ENCODE measurements at regions of chr1 and their contacts with region 1.

Region 1: DNA sequence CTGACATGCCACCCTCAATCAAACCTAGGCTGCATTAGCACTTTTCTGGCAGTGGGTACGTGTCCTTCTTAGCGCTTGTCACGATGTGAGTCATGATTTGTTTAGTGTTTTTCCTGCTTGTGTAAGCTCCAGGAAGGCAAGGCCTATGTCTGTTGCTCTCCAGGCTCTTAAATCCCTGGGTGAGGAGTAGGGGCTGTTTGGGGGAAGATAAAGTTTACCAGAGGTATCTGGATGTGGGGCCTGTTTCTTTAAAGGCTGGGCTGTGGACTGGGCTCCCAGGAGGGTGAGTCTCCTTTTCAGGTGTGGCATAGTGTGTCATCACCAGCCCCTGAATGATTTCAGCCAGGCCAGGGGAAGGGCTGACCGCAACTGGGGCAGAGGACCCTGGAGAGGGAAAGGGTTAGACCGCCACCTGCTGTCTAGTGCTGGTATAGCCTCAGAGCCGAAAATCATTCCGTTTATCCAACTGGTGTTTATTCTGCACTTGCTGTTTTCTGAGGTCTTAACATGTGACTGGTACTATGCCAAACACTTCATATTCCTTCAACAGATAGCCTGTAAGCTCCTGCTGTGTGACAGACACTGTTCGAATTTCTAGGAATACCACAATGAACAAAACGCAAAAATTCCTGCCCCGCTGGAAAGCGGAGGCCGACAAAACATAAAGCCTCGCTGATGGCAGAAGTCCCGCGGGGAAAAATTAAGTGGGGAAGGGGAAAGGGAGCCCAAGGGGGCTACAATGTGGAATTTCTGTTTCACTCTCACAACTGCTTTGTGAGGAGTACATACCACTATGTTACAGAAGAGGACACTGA is 9.7 kb downstream of the SERINC2 start:
- DNase-seq: peak; percentile 76
- H3K4me3 ChIP-seq: no peak overlapping the region
- H3K27ac ChIP-seq: no peak overlapping the region
- H3K4me1 ChIP-seq: no peaks in the 10 kb centered on the region
- H3K27me3 ChIP-seq: no peaks in the 10 kb centered on the region
- CTCF ChIP-seq: peak; percentile 74 to 95 (median 88)
- EP300 ChIP-seq: no peak
- POLR2A ChIP-seq: no peak

Region 2: GRCh38 chr1:31183873-31184554 is 238.7 kb before region 1 on chr1:
- intact Hi-C with region 1: loop called (anchors 1 kb)
- DNase-seq: no peak
- H3K4me3 ChIP-seq: no peak overlapping the region
- H3K27ac ChIP-seq: no peak overlapping the region
- H3K4me1 ChIP-seq: peaks cover 0 to 16% (median 12%) of the 10 kb centered on the region in 4 donors
- H3K27me3 ChIP-seq: peaks cover 3 to 38% (median 26%) of the 10 kb centered on the region in 3 donors
- CTCF ChIP-seq: peak in 3 of 4 experiments; percentile 56 to 73 (median 59)
- EP300 ChIP-seq: no peak
- POLR2A ChIP-seq: no peak

Region 3: DNA sequence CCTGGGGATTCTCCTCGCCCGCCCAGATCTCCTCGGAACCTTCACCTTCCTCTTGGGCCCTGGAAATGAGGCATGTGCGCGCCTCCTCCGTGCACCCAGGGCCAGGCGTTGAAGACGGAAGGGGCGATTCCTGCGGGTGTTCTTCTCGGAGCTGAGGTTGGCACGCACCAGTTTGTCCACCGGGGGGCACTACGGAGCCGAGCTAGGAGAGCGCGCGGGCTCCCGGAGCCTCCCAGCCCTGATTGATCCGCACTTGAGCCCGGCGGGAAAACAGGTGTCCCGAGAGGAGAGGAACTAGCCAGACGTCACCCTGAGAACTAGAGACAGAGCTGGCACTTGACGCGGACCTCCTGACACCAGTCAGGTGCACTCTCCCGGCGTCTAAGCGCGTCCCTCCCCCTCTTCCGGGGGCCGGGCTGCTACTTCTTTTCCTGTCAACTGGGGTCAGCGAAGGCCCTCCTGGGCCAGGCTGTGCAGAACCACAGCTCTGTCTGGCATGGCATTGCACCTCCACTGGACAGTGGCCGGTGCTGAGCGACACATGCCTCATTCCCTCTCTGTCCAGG is 28.0 kb before region 1 on chr1:
- intact Hi-C with region 1: loop called (anchors 2 kb)
- DNase-seq: peak; percentile 87
- H3K4me3 ChIP-seq: peak overlapping the region in 3 of 4 donors; percentile 28 to 43 (median 43)
- H3K27ac ChIP-seq: no peak overlapping the region
- H3K4me1 ChIP-seq: peaks cover 0 to 9% (median 7%) of the 10 kb centered on the region in 4 donors
- H3K27me3 ChIP-seq: no peaks in the 10 kb centered on the region
- CTCF ChIP-seq: peak; percentile 67 to 87 (median 80)
- EP300 ChIP-seq: no peak
- POLR2A ChIP-seq: no peak